Ascending aorta (tissue), 2 donors: ENCODE measurements at regions of chrX and their contacts with region 1.

Region 1: GRCh38 chrX:150568320-150569154 is at the start of gene MTM1:
- DNase-seq: peak; percentile 82 to 96
- H3K4me3 ChIP-seq: peak within 1 kb of the TSS; percentile 55 to 74
- H3K27ac ChIP-seq: peak within 1 kb of the TSS; percentile 76 to 84
- H3K4me1 ChIP-seq: no peaks in the 10 kb centered on the region
- H3K27me3 ChIP-seq: no peaks in the 10 kb centered on the region
- CTCF ChIP-seq: no peak
- total RNA-seq, gene MTM1: 7.3 TPM

Region 2: DNA sequence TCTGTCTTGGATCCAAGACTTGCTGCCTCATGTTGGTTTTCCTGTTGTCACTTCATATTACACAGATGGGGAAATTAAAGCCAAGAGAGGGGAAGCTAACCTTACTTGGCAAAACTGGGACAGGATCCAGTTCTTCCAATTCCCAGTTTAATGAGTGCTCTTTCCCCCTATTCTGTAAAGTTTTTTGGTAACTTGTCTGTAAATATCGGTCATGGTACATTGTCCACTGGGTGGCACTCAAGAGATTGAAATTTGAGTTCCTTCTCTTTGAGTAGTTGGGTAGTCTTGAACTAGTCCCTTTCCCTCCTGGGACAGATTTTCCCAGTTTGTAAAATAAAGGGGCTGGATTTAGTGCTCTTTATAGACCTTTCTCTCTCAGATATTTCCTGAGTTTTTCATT is 617.9 kb before region 1 on chrX:
- intact Hi-C with region 1: loop called (anchors 10 kb)
- DNase-seq: no peak
- H3K4me3 ChIP-seq: no peak overlapping the region
- H3K27ac ChIP-seq: no peak overlapping the region
- H3K4me1 ChIP-seq: peaks cover 0 to 6% of the 10 kb centered on the region in 2 donors
- H3K27me3 ChIP-seq: no peaks in the 10 kb centered on the region
- CTCF ChIP-seq: peak in 2 of 3 experiments; percentile 26 to 43

Region 3: GRCh38 chrX:150508451-150509367 is 59.8 kb before region 1 on chrX:
- intact Hi-C with region 1: loop called (anchors 2 kb)
- DNase-seq: peak in 1 of 2 donors; percentile 77
- H3K4me3 ChIP-seq: peak overlapping the region; percentile 12 to 52
- H3K27ac ChIP-seq: peak overlapping the region; percentile 66 to 84
- H3K4me1 ChIP-seq: peaks cover 0 to 12% of the 10 kb centered on the region in 2 donors
- H3K27me3 ChIP-seq: no peaks in the 10 kb centered on the region
- CTCF ChIP-seq: no peak

Region 4: DNA sequence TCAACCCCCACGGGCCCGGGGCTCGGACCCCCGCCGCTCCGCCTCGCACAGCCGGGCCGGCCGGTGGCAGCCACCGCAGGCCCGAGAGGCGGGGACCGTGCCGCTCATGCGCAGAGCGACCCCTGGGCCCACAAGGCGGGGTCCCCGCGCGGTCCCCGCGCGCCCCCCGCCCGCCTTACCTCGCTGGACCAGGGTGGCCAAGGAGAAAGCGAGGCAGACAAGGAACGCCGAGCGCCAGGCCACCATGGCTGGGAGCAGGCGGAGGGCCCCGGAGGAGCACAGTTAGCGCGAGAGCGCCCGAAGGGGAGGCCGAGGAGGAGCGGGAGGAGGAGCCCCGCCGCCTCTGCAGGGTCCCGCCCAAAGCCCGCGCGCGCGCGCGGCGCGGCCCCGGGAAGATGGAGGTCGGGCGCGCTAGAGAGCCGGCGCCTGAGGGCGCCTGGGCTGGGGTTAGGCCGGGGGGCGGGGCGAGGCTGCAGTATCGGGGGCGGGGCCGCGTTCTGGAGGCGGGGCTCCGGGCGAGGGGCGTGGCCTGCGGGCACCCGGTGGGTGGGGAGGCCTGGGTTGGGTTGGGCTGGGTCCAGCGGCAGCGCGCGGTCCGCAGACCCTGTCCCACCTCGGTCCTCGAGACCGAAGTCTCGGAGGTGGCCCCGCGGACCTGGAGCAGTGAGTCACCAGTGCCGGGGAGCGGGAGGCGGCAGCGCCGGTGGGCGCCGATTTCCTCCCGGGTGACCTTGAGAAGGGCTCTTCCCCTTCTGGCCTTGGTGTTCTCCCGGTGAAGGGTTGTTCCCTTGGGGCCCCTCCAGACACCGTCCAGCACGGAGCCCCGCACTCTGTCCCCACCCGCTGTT is 330.0 kb after region 1 on chrX and contains the start of gene CD99L2:
- intact Hi-C with region 1: no loop called
- DNase-seq: peak; percentile 39 to 91
- H3K4me3 ChIP-seq: peak within 1 kb of the TSS; percentile 71 to 83
- H3K27ac ChIP-seq: peak within 1 kb of the TSS; percentile 65 to 71
- H3K4me1 ChIP-seq: no peaks in the 10 kb centered on the region
- H3K27me3 ChIP-seq: no peaks in the 10 kb centered on the region
- CTCF ChIP-seq: no peak
- total RNA-seq, gene CD99L2: 83.4 TPM